ENCODE measurements at regions of chr12 and their contacts with region 1.

Region 1: GRCh38 chr12:90102957-90103652 is 394.5 kb upstream of the ATP2B1 start:
- DNase-seq: peak in 4 of 5 donors; percentile 42 to 54 (median 52)
- H3K4me3 ChIP-seq: no peak overlapping the region
- H3K4me3 Mint-ChIP-seq: peak overlapping the region; percentile 54 to 83 (median 80)
- H3K27ac ChIP-seq: no peak overlapping the region
- H3K27ac Mint-ChIP-seq: peak overlapping the region in 3 of 7 donors; percentile 5 to 83 (median 78)
- H3K4me1 ChIP-seq: peaks cover 14% of the 10 kb centered on the region
- H3K4me1 Mint-ChIP-seq: peaks cover 14 to 24% (median 15%) of the 10 kb centered on the region in 4 donors
- H3K27me3 ChIP-seq: no peaks in the 10 kb centered on the region
- H3K27me3 Mint-ChIP-seq: peaks cover 0 to 3% of the 10 kb centered on the region in 2 donors

Region 2: DNA sequence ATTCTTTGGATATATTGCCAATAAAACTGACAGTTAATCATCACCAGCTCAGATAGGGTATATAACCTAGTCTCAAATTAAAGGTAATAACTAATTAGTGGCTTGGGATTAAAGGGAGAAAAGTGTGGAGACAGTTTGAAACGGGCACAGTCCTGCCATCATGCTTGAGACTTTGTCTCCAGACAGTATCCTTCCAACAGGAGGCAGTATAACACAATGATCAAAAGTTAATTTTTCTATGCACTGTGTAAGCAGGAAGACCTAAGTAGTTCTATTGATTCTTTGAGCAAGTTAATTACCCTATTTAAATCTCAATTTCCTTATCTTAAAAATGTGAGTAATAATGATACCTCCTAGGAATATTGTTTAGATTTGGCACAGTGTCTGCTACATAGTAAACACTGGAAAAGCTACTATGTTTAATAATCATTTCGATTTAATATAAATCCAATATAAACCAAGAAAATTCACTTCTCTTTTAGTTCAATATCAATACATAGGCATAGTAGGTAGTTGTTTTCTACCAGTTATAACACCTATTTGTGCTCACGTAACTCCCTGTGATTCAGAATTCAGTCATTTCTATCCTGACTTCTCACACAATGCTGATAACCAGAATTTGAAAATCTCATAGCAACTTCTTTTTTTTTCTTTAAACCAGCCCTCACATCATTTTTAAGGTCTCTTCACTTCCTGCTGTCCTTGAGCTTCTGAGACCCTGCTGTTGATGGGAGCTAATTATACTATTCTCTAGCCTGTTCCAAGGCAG is 632.2 kb before region 1 on chr12:
- CTCF ChIA-PET with region 1: interaction called, 4 read pairs
- POLR2A ChIA-PET with region 1: no interaction called
- intact Hi-C with region 1: loop called (anchors 2 kb)
- DNase-seq: peak in 4 of 5 donors; percentile 47 to 55 (median 53)
- H3K4me3 ChIP-seq: no peak overlapping the region
- H3K4me3 Mint-ChIP-seq: peak overlapping the region in 2 of 8 donors; percentile 41 to 55
- H3K27ac ChIP-seq: no peak overlapping the region
- H3K27ac Mint-ChIP-seq: peak overlapping the region in 4 of 7 donors; percentile 28 to 84 (median 76)
- H3K4me1 ChIP-seq: peaks cover 52% of the 10 kb centered on the region
- H3K4me1 Mint-ChIP-seq: peaks cover 34 to 60% (median 46%) of the 10 kb centered on the region in 4 donors
- H3K27me3 ChIP-seq: no peaks in the 10 kb centered on the region
- H3K27me3 Mint-ChIP-seq: no peaks in the 10 kb centered on the region

Region 3: DNA sequence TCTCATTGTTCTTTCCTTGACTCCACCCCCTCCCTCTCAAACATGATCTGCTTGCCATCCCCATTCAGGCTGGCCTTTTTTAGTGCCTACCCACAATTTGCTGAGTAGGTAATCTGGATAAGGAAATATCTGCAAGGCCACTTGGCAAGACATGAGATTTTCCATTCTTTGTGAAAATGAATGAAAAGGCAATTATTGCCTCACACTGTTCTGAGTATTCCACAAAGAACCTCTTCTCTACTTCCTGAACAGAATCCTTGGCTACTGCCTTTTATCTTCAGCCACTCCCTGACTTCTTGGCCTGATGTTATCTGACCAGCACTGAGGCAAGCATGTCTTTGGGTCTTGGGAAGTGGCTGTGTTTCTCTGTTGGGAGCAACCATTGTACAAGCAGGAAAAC is 131.2 kb before region 1 on chr12:
- CTCF ChIA-PET with region 1: no interaction called
- POLR2A ChIA-PET with region 1: no interaction called
- intact Hi-C with region 1: no loop called
- DNase-seq: no peak
- H3K4me3 ChIP-seq: no peak overlapping the region
- H3K4me3 Mint-ChIP-seq: no peak overlapping the region
- H3K27ac ChIP-seq: no peak overlapping the region
- H3K27ac Mint-ChIP-seq: no peak overlapping the region
- H3K4me1 ChIP-seq: no peaks in the 10 kb centered on the region
- H3K4me1 Mint-ChIP-seq: peaks cover 9 to 20% (median 14%) of the 10 kb centered on the region in 4 donors
- H3K27me3 ChIP-seq: no peaks in the 10 kb centered on the region
- H3K27me3 Mint-ChIP-seq: peaks cover 0 to 1% of the 10 kb centered on the region in 2 donors

Region 4: GRCh38 chr12:90013409-90013808 is 89.7 kb before region 1 on chr12:
- CTCF ChIA-PET with region 1: interaction called, 10 read pairs
- POLR2A ChIA-PET with region 1: no interaction called
- intact Hi-C with region 1: no loop called
- DNase-seq: peak in 4 of 5 donors; percentile 21 to 32 (median 29)
- H3K4me3 ChIP-seq: no peak overlapping the region
- H3K4me3 Mint-ChIP-seq: no peak overlapping the region
- H3K27ac ChIP-seq: no peak overlapping the region
- H3K27ac Mint-ChIP-seq: peak overlapping the region in 2 of 7 donors; percentile 31 to 65
- H3K4me1 ChIP-seq: peaks cover 3% of the 10 kb centered on the region
- H3K4me1 Mint-ChIP-seq: peaks cover 8 to 11% (median 10%) of the 10 kb centered on the region in 4 donors
- H3K27me3 ChIP-seq: no peaks in the 10 kb centered on the region
- H3K27me3 Mint-ChIP-seq: no peaks in the 10 kb centered on the region

Region 5: GRCh38 chr12:90076851-90077319 is 26.2 kb before region 1 on chr12:
- CTCF ChIA-PET with region 1: interaction called, 11 read pairs
- POLR2A ChIA-PET with region 1: interaction called, 4 read pairs
- intact Hi-C with region 1: no loop called
- DNase-seq: peak in 2 of 5 donors; percentile 14
- H3K4me3 ChIP-seq: no peak overlapping the region
- H3K4me3 Mint-ChIP-seq: peak overlapping the region; percentile 3 to 76 (median 58)
- H3K27ac ChIP-seq: no peak overlapping the region
- H3K27ac Mint-ChIP-seq: peak overlapping the region; percentile 32 to 85 (median 70)
- H3K4me1 ChIP-seq: peaks cover 29% of the 10 kb centered on the region
- H3K4me1 Mint-ChIP-seq: peaks cover 22 to 33% (median 28%) of the 10 kb centered on the region in 4 donors
- H3K27me3 ChIP-seq: no peaks in the 10 kb centered on the region
- H3K27me3 Mint-ChIP-seq: no peaks in the 10 kb centered on the region

Measured in CD4-positive, alpha-beta memory T cell (primary cell).